ENCODE measurements at regions of chr13 and their contacts with region 1.

Region 1: DNA sequence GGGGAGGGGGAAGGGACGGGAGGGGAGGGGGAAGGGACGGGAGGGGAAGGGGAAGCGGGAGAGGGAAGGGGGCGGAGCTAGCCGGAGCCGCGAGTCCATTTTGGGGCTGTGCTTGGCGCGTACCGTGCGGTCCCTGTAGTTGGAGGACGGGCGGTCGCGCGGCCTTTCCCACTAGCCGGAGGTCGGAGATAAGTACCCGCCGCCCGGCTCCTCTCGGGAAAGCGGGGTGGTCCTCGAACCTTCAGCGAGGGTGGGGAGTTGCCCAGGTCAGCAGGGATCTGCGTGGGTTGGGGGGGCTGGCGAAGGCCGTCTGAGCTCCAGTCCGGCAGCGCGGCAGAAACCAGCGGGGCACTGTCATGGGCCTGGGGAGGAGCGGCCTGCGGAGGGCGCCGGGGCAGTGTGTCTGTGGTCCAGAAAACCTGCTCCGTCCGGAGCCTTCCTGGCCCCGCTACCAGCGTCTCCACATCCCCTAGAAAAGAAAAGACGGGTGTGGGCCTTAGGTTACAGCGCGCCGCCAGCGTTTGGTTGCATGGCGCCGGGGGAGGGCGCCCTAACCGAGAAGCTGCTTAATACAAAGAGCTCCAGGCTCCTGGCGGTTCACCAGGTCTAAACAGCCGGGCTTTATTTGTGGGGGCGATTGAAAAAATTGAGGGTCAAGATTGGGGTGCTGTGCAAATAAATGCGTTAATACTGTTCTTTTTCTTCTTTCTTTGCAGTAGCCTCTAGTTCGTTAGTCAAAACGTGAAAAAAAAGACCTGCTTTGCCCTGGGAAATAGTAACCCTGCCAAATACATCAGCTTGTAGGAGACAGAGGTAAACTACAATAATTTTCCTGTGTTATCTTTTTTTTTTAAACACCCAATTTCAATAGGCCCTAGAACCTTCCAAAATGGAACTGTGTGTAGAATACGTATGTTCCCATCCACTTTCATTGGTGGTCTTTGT is at the start of gene TRIM13:
- DNase-seq: peak; percentile 53 to 89
- H3K4me3 ChIP-seq: peak within 1 kb of the TSS; percentile 89 to 95 (median 92)
- H3K27ac ChIP-seq: peak within 1 kb of the TSS; percentile 95
- H3K4me1 ChIP-seq: peaks cover 2 to 6% (median 5%) of the 10 kb centered on the region in 4 experiments; a peak in 4 of 7 replicates
- H3K27me3 ChIP-seq: peaks cover 0 to 2% (median 0%) of the 10 kb centered on the region in 4 experiments; a peak in 2 of 7 replicates
- CTCF ChIP-seq: peak; percentile 62 to 83 (median 65)
- EP300 ChIP-seq: no peak
- POLR2A ChIP-seq: peak; percentile 81 to 89
- RAD21 ChIP-seq: peak; percentile 48 to 67
- total RNA-seq, gene TRIM13: 31.5 and 34.9 TPM in 2 replicates

Region 2: GRCh38 chr13:49792550-49793324 is 204.5 kb before region 1 on chr13 and contains the start of gene KPNA3:
- CTCF ChIA-PET with region 1: no interaction called
- POLR2A ChIA-PET with region 1: interaction called, 10 read pairs
- DNase-seq: peak; percentile 81 to 91
- H3K4me3 ChIP-seq: peak within 1 kb of the TSS; percentile 84 to 93 (median 91)
- H3K27ac ChIP-seq: peak within 1 kb of the TSS; percentile 95
- H3K4me1 ChIP-seq: peaks cover 3 to 8% (median 5%) of the 10 kb centered on the region in 4 experiments; a peak in 4 of 7 replicates
- H3K27me3 ChIP-seq: no peaks in the 10 kb centered on the region
- CTCF ChIP-seq: no peak; a peak in 2 of 4 replicates
- EP300 ChIP-seq: no peak
- POLR2A ChIP-seq: peak; percentile 59 to 94
- RAD21 ChIP-seq: no peak; a peak in 2 of 4 replicates
- total RNA-seq, gene KPNA3: 62.3 and 63.2 TPM in 2 replicates

Region 3: DNA sequence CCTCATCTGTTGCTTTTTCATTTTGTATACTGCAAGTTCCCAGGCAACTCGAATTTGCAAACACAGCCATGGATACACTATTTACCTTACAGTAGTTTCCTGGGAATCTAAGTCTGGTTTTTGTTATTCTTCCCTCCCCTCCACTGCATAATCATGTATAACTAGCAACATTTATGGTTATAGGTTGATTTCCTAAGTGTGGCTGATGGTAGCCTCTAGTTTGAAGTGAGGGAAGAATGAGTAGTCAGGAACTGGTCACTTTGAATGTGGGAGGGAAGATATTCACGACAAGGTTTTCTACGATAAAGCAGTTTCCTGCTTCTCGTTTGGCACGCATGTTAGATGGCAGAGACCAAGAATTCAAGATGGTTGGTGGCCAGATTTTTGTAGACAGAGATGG is 18.0 kb after region 1 on chr13 and contains the start of gene KCNRG:
- CTCF ChIA-PET with region 1: interaction called, 8 read pairs
- POLR2A ChIA-PET with region 1: interaction called, 27 read pairs
- DNase-seq: no peak
- H3K4me3 ChIP-seq: peak within 1 kb of the TSS in 1 of 4 experiments; percentile 20; a peak in 1 of 8 replicates
- H3K27ac ChIP-seq: peak within 1 kb of the TSS; percentile 48
- H3K4me1 ChIP-seq: peaks cover 0 to 9% (median 6%) of the 10 kb centered on the region in 4 experiments; a peak in 5 of 7 replicates
- H3K27me3 ChIP-seq: no peaks in the 10 kb centered on the region
- CTCF ChIP-seq: no peak
- EP300 ChIP-seq: no peak
- POLR2A ChIP-seq: no peak
- RAD21 ChIP-seq: no peak
- total RNA-seq, gene KCNRG: 0.65 TPM in 1 of 2 replicates, not detected in the other

Region 4: DNA sequence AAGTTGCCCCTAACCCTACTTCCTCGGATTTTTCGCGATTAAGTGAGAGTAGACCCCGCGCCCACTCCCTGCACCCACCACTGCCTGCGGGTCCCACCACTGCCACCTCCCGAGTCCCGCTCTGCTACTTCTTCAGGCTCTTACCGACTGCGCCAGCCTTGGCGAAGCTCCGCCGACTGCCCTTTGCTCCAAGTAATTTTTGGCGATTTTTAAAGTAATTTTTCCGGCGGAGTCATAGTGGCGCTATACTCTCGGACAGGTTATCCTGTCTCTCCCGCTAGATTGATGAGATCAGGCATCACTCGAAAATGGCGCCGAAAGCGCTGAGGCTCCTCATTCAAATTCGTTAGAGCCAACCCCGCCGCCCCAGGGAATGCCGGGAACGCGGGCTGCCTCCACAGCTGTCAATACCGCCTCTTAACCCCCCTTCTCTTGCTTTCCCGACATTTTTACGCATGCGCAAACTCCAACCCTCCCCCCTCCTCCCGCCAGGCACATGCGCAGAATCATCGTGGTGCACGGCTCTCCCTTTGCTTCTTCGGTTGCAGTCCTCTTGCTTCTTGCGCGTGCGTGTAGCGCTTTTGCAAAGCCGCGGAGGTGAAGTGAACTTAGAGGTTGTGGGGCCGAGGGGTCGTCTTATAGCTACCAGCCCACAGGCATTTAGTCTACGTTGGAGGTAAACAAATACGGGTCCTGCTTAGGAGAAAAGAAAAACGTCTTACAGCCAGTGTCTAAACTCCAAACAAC is 84.6 kb after region 1 on chr13:
- CTCF ChIA-PET with region 1: interaction called, 45 read pairs
- POLR2A ChIA-PET with region 1: interaction called, 39 read pairs
- DNase-seq: peak; percentile 98 to 99
- H3K4me3 ChIP-seq: peak overlapping the region; percentile 66 to 85 (median 69)
- H3K27ac ChIP-seq: peak overlapping the region; percentile 75; the same call in 1 of the 2 replicates
- H3K4me1 ChIP-seq: peaks cover 0 to 8% (median 3%) of the 10 kb centered on the region in 4 experiments; a peak in 3 of 7 replicates
- H3K27me3 ChIP-seq: no peaks in the 10 kb centered on the region; a peak in 2 of 7 replicates
- CTCF ChIP-seq: peak in 1 of 3 experiments; percentile 15; a peak in 1 of 4 replicates
- EP300 ChIP-seq: no peak
- POLR2A ChIP-seq: peak in 1 of 2 experiments; percentile 15; a peak in 1 of 3 replicates
- RAD21 ChIP-seq: no peak

Region 5: GRCh38 chr13:50130123-50130946 is 133.1 kb after region 1 on chr13:
- CTCF ChIA-PET with region 1: interaction called, 5 read pairs
- POLR2A ChIA-PET with region 1: interaction called, 52 read pairs
- DNase-seq: peak in 1 of 2 experiments; percentile 77
- H3K4me3 ChIP-seq: peak overlapping the region; percentile 34 to 85 (median 40); a peak in 7 of 8 replicates
- H3K27ac ChIP-seq: no peak overlapping the region
- H3K4me1 ChIP-seq: peaks cover 8 to 45% (median 26%) of the 10 kb centered on the region in 4 experiments
- H3K27me3 ChIP-seq: peaks cover 72 to 98% (median 91%) of the 10 kb centered on the region in 4 experiments
- CTCF ChIP-seq: no peak
- EP300 ChIP-seq: no peak
- POLR2A ChIP-seq: no peak
- RAD21 ChIP-seq: no peak

Measured in H1 (cell line).